ENCODE measurements at regions of chr12 and their contacts with region 1.

Region 1: GRCh38 chr12:53039851-53040250 is 10.0 kb upstream of the TNS2 start:
- DNase-seq: no peak
- H3K4me3 ChIP-seq: no peak overlapping the region
- H3K27me3 ChIP-seq: no peaks in the 10 kb centered on the region
- CTCF ChIP-seq: no peak

Region 2: DNA sequence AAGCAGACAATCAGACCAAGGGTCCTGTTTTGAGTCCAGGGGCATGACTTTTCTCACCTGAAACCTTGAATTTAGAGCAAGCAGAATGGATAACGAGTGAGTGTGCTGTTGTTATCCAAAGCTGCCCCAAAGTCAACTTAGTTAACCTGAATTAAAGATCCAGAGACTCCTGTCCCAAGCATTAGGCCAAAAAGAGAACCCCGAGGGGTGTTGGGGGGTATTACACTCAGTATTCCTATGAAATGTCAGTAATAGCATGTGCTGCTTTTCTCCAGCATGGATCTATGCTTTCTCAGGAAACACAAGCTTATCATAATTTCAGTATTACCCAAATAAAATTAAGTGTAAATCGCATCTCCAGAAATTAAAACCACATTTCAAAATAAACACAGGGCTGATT is 14.6 kb before region 1 on chr12:
- CTCF ChIA-PET with region 1: interaction called, 15 read pairs
- POLR2A ChIA-PET with region 1: interaction called, 4 read pairs
- DNase-seq: no peak
- H3K4me3 ChIP-seq: no peak overlapping the region
- H3K27me3 ChIP-seq: no peaks in the 10 kb centered on the region
- CTCF ChIP-seq: no peak

Region 3: DNA sequence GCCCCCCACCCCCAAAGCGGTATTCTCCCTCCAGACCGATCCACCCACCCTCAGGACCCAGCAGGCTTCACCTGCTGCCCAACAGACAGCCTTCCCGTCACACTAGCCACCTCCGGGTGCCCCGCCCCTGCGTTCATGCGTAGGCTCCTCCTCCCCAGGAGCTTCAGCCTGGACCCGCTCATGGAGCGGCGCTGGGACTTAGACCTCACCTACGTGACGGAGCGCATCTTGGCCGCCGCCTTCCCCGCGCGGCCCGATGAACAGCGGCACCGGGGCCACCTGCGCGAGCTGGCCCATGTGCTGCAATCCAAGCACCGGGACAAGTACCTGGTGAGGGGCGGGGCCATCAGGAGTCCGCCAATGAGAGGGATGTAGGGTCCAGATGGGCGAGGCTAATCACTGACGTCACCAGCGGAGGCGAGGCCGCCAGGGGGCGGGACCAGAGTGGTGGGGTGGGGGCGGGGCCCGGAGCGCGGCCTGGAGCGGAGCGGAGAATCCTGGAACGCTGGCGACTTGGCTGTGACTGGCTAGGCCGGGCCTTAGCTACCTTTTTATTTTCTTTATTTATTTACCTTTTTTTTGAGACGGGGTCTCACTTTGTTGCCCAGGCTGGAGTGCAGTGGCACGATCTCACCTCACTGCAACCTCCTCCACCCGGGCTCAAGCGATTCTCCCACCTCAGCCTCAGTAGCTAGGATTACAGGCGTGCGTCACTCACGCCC is 14.4 kb after region 1 on chr12:
- CTCF ChIA-PET with region 1: interaction called, 24 read pairs
- POLR2A ChIA-PET with region 1: no interaction called
- DNase-seq: no peak
- H3K4me3 ChIP-seq: peak overlapping the region; percentile 24
- H3K27me3 ChIP-seq: no peaks in the 10 kb centered on the region
- CTCF ChIP-seq: no peak